Naive thymus-derived CD4-positive, alpha-beta T cell (primary cell): ENCODE measurements at regions of chr20 and their contacts with region 1.

Region 1: DNA sequence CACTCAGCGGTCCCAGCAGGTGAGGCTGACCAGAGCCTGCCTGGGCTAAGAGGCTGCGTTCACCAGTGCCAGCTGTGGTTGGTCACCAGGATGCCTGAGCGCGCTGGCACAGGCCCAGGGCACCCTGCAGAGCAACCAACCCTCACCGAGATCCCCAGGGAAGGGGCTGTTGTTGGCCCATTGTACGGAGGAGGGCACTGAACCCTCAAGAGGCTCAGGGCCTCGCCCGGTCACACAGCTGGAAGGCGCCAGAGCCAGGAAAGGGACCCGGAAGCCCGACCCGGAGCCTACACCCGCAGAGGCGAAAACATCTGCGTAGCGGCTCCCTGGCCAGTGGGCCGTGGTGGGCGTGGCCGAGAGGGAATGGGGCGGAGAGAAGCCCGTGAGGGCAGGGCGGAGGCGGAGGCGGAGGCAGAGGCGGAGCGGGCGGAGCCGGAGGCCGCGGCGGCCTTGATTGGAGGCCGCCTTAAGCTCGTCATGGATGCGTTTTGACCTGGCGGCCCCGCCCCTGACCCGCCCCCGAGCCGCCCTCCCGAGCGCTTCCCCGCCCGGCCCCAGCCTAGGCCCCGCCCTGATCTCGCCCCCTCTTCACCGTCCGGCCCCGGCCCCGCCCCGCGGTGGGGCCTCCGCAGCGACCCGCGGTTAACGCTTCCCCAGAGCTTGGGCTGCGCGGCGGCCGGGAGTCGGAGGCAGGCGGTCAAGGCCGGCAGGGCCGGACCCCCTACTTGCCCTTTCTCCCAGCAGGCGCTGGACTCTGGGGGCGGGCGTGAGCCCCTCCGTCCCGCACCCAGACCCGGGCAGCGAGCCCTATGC is 2.2 kb upstream of the MRGBP start:
- DNase-seq: peak; percentile 85 to 100 (median 93)
- ATAC-seq: peak; percentile 87
- H3K4me3 ChIP-seq: peak overlapping the region; percentile 78
- H3K4me3 Mint-ChIP-seq: peak overlapping the region; percentile 78 to 95 (median 87)
- H3K27ac ChIP-seq: peak overlapping the region; percentile 83
- H3K27ac Mint-ChIP-seq: peak overlapping the region; percentile 86 to 97 (median 92)
- H3K4me1 ChIP-seq: peaks cover 15 to 24% of the 10 kb centered on the region in 2 donors
- H3K4me1 Mint-ChIP-seq: peaks cover 26 to 44% (median 41%) of the 10 kb centered on the region in 7 donors
- H3K27me3 ChIP-seq: no peaks in the 10 kb centered on the region
- H3K27me3 Mint-ChIP-seq: peaks cover 0 to 3% (median 0%) of the 10 kb centered on the region in 5 donors

Region 2: DNA sequence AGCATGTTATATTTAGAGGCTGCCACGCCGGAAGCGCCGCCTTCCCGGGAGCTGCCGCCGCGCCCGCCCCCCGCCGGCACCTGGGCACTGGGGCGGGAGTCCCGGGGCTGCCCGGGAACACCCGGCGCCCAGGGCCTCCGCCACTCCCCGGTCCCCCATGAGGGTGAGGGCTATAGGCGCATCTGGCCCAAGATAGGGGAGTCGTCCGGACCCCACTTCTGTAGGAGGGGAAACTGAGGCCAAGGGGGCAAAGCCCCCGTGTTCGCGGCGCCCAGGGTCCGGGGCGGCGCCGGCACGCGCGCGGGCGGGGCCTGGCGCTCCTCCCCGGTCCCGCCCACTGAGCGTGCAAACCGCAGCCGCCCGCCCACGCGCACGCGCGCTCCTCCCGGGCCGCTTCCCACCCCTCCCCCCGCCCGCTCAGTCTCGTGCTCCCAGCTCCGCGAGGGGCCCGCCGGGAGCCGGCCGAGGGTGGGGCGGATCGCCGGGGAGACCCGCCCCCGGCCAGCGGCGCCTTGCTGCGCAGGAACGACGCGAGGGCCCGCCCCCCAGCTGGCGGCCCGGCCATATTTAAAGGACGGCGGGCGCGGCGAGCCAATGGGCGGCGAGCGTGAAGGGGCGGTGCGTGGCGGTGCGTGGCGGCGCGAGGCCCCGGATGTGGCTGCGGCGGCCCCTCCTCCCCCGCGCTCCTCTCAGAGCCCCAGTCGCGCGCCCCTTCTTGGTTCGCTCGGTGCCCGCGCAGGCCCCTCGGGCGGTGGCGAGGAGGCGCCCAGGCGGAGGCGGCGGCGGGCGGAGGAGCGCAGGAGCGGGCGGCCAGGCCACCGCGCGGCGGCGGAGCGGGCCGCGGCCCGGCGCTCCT is 672.1 kb before region 1 on chr20 and contains the start of gene LSM14B:
- CTCF ChIA-PET with region 1: no interaction called
- POLR2A ChIA-PET with region 1: no interaction called
- intact Hi-C with region 1: loop called in 1 of 2 experiments (anchors 1 kb)
- DNase-seq: peak; percentile 94 to 99 (median 96)
- ATAC-seq: peak; percentile 91
- H3K4me3 ChIP-seq: peak within 1 kb of the TSS; percentile 77
- H3K4me3 Mint-ChIP-seq: peak within 1 kb of the TSS; percentile 86 to 96 (median 92)
- H3K27ac ChIP-seq: peak within 1 kb of the TSS; percentile 81
- H3K27ac Mint-ChIP-seq: peak within 1 kb of the TSS; percentile 84 to 97 (median 95)
- H3K4me1 ChIP-seq: peaks cover 33 to 39% of the 10 kb centered on the region in 2 donors
- H3K4me1 Mint-ChIP-seq: peaks cover 42 to 71% (median 59%) of the 10 kb centered on the region in 7 donors
- H3K27me3 ChIP-seq: no peaks in the 10 kb centered on the region
- H3K27me3 Mint-ChIP-seq: no peaks in the 10 kb centered on the region
- total RNA-seq, gene LSM14B: 39.5 to 61.5 (median 41.9) TPM

Region 3: DNA sequence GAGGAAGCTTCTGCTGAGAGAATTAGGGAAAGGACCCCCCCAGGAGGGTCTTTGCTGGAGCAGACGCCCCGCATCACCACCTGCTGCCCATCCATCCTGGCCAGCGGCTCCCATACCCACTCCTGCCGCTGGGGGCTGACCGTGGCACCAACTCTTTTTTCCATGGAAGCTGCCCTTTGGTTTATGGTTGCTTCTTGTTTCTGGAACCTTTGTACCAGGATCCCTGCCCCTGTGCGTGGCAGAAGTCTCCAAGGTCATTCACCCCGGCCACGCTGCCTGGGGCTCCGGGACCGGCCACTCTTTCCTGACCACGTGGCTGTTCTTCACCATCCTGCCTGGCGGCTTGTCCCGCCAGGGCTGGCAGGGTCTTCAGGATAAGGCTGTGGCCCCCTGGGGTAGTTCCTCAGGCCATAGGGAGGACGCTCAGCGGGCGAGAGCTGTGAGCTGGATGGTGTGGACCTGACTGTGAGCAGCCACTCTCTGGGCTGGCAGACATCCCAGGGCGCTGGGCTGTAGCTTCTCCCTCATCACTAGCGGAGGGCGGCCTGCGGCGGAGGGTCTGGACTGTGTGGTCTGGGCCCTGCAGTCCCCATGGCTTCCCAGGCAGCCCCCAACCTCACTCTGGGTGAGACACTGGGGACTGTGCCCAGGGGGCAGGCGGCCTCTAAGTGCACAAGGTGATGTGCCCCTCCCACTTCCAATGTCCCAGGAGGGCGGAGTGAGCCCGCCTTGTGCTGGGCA is 344.0 kb before region 1 on chr20:
- CTCF ChIA-PET with region 1: no interaction called
- POLR2A ChIA-PET with region 1: no interaction called
- intact Hi-C with region 1: no loop called
- DNase-seq: no peak
- ATAC-seq: no peak
- H3K4me3 ChIP-seq: no peak overlapping the region
- H3K4me3 Mint-ChIP-seq: no peak overlapping the region
- H3K27ac ChIP-seq: no peak overlapping the region
- H3K27ac Mint-ChIP-seq: no peak overlapping the region
- H3K4me1 ChIP-seq: no peaks in the 10 kb centered on the region
- H3K4me1 Mint-ChIP-seq: no peaks in the 10 kb centered on the region
- H3K27me3 ChIP-seq: no peaks in the 10 kb centered on the region
- H3K27me3 Mint-ChIP-seq: peaks cover 0 to 15% (median 0%) of the 10 kb centered on the region in 5 donors

Region 4: GRCh38 chr20:62500237-62500864 is 293.8 kb before region 1 on chr20:
- CTCF ChIA-PET with region 1: interaction called, 3 read pairs
- POLR2A ChIA-PET with region 1: interaction called, 6 read pairs
- intact Hi-C with region 1: loop called in 1 of 2 experiments (anchors 1 kb)
- DNase-seq: peak; percentile 43 to 84 (median 70)
- ATAC-seq: peak; percentile 73
- H3K4me3 ChIP-seq: no peak overlapping the region
- H3K4me3 Mint-ChIP-seq: peak overlapping the region in 1 of 10 donors; percentile 24
- H3K27ac ChIP-seq: no peak overlapping the region
- H3K27ac Mint-ChIP-seq: peak overlapping the region in 3 of 9 donors; percentile 60 to 95 (median 70)
- H3K4me1 ChIP-seq: peaks cover 0 to 5% of the 10 kb centered on the region in 2 donors
- H3K4me1 Mint-ChIP-seq: peaks cover 0 to 27% (median 9%) of the 10 kb centered on the region in 7 donors
- H3K27me3 ChIP-seq: no peaks in the 10 kb centered on the region
- H3K27me3 Mint-ChIP-seq: peaks cover 0 to 5% (median 0%) of the 10 kb centered on the region in 5 donors

Region 5: GRCh38 chr20:62668441-62669027 is 125.6 kb before region 1 on chr20:
- CTCF ChIA-PET with region 1: interaction called, 8 read pairs
- POLR2A ChIA-PET with region 1: interaction called, 5 read pairs
- intact Hi-C with region 1: loop called in 1 of 2 experiments (anchors 1 kb)
- DNase-seq: peak in 5 of 9 donors; percentile 10 to 32 (median 23)
- ATAC-seq: peak; percentile 59
- H3K4me3 ChIP-seq: no peak overlapping the region
- H3K4me3 Mint-ChIP-seq: no peak overlapping the region
- H3K27ac ChIP-seq: no peak overlapping the region
- H3K27ac Mint-ChIP-seq: peak overlapping the region in 1 of 9 donors; percentile 62
- H3K4me1 ChIP-seq: no peaks in the 10 kb centered on the region
- H3K4me1 Mint-ChIP-seq: peaks cover 0 to 2% (median 0%) of the 10 kb centered on the region in 7 donors
- H3K27me3 ChIP-seq: no peaks in the 10 kb centered on the region
- H3K27me3 Mint-ChIP-seq: no peaks in the 10 kb centered on the region

Region 6: DNA sequence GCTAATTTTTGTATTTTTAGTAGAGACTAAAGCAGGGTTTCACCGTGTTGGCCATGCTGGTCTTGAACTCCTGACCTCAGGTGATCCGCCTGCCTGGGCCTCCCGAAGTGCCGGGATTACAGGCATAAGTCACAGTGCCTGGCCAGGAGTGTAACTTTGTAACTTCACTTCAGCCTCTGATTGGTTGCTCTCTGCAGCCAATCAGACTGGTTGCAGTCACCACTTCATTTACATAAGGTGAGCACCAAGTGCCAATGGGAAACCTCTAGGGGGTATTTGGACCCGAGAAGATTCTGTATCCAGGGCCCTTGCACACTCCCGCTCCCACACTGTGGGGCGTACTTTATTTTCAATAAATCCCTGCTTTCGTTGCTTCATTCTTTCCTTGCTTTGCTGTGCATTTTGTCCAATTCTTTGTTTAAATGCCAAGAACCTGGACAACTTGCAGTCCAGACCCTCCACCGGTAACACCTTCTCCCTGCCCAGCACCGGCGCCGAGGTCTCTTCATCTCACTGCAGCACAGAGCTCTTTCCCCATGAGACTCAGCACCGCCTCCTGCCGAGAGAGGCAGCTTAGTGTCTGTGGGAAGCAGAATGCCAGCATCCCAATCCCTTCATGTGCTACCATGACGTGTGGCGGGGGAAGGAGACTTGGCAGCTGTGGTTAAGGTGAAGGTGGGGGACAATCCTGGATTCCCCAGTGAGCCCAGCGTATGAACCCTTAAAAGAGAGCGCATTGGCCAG is 11.8 kb before region 1 on chr20:
- CTCF ChIA-PET with region 1: interaction called, 3 read pairs
- POLR2A ChIA-PET with region 1: interaction called, 20 read pairs
- intact Hi-C with region 1: loop called (anchors 1 kb)
- DNase-seq: no peak
- ATAC-seq: no peak
- H3K4me3 ChIP-seq: no peak overlapping the region
- H3K4me3 Mint-ChIP-seq: no peak overlapping the region
- H3K27ac ChIP-seq: no peak overlapping the region
- H3K27ac Mint-ChIP-seq: peak overlapping the region in 6 of 9 donors; percentile 54 to 85 (median 64)
- H3K4me1 ChIP-seq: peaks cover 0 to 5% of the 10 kb centered on the region in 2 donors
- H3K4me1 Mint-ChIP-seq: peaks cover 2 to 24% (median 19%) of the 10 kb centered on the region in 7 donors
- H3K27me3 ChIP-seq: no peaks in the 10 kb centered on the region
- H3K27me3 Mint-ChIP-seq: no peaks in the 10 kb centered on the region

Region 7: GRCh38 chr20:62937366-62938104 is 143.4 kb after region 1 on chr20:
- CTCF ChIA-PET with region 1: no interaction called
- POLR2A ChIA-PET with region 1: interaction called, 3 read pairs
- intact Hi-C with region 1: loop called in 1 of 2 experiments (anchors 5 kb)
- DNase-seq: peak; percentile 96 to 98 (median 97)
- ATAC-seq: peak; percentile 95
- H3K4me3 ChIP-seq: peak overlapping the region; percentile 94
- H3K4me3 Mint-ChIP-seq: peak overlapping the region in 6 of 10 donors; percentile 94 to 98 (median 96)
- H3K27ac ChIP-seq: peak overlapping the region; percentile 97
- H3K27ac Mint-ChIP-seq: peak overlapping the region; percentile 88 to 98 (median 95)
- H3K4me1 ChIP-seq: peaks cover 34 to 37% of the 10 kb centered on the region in 2 donors
- H3K4me1 Mint-ChIP-seq: peaks cover 26 to 51% (median 40%) of the 10 kb centered on the region in 7 donors
- H3K27me3 ChIP-seq: no peaks in the 10 kb centered on the region
- H3K27me3 Mint-ChIP-seq: no peaks in the 10 kb centered on the region

Region 8: GRCh38 chr20:63208346-63208909 is 414.3 kb after region 1 on chr20:
- CTCF ChIA-PET with region 1: no interaction called
- POLR2A ChIA-PET with region 1: no interaction called
- intact Hi-C with region 1: no loop called
- DNase-seq: no peak
- ATAC-seq: no peak
- H3K4me3 ChIP-seq: no peak overlapping the region
- H3K4me3 Mint-ChIP-seq: no peak overlapping the region
- H3K27ac ChIP-seq: no peak overlapping the region
- H3K27ac Mint-ChIP-seq: no peak overlapping the region
- H3K4me1 ChIP-seq: peaks cover 0 to 18% of the 10 kb centered on the region in 2 donors
- H3K4me1 Mint-ChIP-seq: peaks cover 24 to 71% (median 59%) of the 10 kb centered on the region in 7 donors
- H3K27me3 ChIP-seq: no peaks in the 10 kb centered on the region
- H3K27me3 Mint-ChIP-seq: no peaks in the 10 kb centered on the region